Activated naive CD4-positive, alpha-beta T cell treated with anti-CD3 and anti-CD28 coated beads, Interleukin-2, amount 10 ng/mL, durations not matched to agents 7 days and 5 days (primary cell): ENCODE measurements at regions of chr12 and their contacts with region 1.

Region 1: DNA sequence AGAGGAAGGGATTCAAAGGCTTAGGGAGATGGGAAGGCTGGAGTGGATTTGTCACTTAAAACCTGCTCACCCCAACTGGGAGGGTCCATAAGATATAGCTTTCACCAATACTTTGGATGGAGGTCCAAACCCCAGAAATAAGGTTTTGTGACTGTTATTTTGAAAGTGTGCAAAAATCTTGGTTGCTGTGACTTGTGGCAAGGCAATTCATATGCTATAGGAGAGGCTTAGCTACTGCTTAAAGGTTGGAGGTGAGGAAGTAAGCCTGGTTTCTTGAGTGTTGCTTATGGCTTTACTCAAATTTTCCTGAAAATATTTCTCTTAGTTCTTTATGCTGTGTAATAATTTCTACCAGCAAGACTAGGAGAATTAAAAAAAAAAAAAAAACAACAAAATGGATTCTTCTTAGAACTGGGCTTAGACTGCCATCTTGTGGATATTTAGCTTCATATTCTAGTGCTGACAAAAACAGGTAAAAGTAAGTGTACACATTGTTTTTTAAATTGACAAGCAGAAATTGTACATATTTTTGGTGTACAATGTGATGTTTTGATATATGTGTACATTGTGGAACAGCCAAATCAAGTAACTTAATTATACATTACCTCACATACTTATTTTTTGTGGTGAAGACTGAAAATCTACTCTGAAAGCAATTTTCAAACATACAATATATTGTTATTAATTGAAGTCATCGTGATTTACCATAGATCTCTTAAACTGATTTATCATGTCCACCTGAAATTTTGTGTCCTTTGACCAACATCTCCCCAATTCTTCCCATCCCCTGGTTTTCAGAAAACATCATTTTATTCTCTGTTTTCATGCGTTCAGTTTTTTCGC is 23.0 kb downstream of the PDE6H start:
- DNase-seq: no peak
- H3K4me3 Mint-ChIP-seq: no peak overlapping the region
- H3K27ac Mint-ChIP-seq: no peak overlapping the region
- H3K4me1 Mint-ChIP-seq: peaks cover 26% of the 10 kb centered on the region
- H3K27me3 Mint-ChIP-seq: peaks cover 21% of the 10 kb centered on the region

Region 2: DNA sequence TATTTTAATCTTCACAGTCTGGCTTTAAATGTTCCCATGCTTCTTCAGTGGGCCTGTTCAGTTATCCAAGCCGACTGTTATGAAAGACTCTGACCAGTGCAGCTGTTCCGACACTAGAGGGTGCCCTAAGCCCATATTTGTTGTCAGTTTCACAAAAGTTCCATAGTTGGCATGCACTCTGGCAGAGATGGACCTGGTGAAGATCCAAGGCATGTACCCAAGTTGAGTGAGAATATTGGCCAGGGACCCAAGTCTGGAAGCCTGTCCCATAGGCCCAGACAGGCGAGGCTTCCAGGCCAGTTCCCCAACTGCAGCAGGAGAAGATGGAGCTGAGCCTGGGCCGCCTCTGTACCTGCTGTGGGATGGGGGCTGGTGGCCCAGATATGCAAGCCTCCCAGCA is 272.0 kb before region 1 on chr12:
- CTCF ChIA-PET with region 1: interaction called, 20 read pairs
- DNase-seq: peak; percentile 73
- H3K4me3 Mint-ChIP-seq: no peak overlapping the region
- H3K27ac Mint-ChIP-seq: no peak overlapping the region
- H3K4me1 Mint-ChIP-seq: peaks cover 3% of the 10 kb centered on the region
- H3K27me3 Mint-ChIP-seq: peaks cover 17% of the 10 kb centered on the region

Region 3: DNA sequence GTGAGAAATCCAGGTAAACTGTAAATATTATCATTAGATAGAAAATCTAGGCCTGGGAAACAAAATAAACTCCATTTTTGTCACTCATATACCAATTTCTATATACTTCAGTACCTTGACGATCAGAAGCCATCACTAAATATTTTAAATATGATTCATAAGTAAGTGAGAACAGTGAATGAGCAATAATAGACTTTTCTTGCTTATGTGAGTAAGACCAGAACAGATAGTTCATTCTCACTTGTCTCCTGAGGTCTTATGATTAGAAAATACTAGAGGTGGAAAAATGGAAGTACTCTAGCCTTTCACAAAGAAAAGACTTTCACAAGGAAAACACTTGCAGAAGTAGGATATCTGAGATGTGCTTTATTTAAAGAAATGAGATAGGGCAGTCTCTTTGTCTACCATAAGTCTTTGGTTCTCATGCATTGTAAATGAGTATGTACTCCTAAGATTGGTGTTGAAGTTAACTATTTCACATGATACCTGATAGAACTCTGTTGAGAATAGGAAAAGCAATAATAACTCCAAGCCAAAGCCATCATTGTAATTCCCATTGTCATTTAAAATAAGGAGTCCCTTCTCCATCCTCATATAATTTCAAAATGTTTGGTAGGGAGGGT is 171.7 kb before region 1 on chr12:
- CTCF ChIA-PET with region 1: no interaction called
- DNase-seq: no peak
- H3K4me3 Mint-ChIP-seq: no peak overlapping the region
- H3K27ac Mint-ChIP-seq: no peak overlapping the region
- H3K4me1 Mint-ChIP-seq: peaks cover 3% of the 10 kb centered on the region
- H3K27me3 Mint-ChIP-seq: peaks cover 4% of the 10 kb centered on the region

Region 4: GRCh38 chr12:14845350-14845750 is 150.5 kb before region 1 on chr12:
- CTCF ChIA-PET with region 1: interaction called, 106 read pairs
- DNase-seq: peak; percentile 52
- H3K4me3 Mint-ChIP-seq: no peak overlapping the region
- H3K27ac Mint-ChIP-seq: no peak overlapping the region
- H3K4me1 Mint-ChIP-seq: peaks cover 2% of the 10 kb centered on the region
- H3K27me3 Mint-ChIP-seq: peaks cover 8% of the 10 kb centered on the region

Region 5: DNA sequence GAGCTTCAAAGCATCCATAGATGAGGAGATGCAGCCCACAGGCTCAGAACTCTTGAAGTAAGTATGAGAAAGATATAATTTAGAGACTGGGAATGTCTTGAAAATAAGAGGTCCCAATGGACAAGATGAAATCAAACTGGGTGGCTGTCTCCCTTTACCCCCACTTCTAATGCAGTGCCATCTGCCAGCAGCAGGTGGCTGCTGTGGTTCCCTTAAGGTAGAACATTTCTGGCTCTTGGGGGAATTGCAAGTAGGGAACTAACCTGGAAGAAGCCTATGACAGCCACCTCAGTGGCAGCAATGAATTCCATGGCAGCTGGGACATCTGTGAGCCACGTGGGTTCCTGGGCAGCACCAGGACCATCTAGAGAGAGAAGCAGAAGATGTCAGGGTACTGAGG is 58.1 kb before region 1 on chr12:
- CTCF ChIA-PET with region 1: interaction called, 17 read pairs
- DNase-seq: no peak
- H3K4me3 Mint-ChIP-seq: no peak overlapping the region
- H3K27ac Mint-ChIP-seq: no peak overlapping the region
- H3K4me1 Mint-ChIP-seq: peaks cover 35% of the 10 kb centered on the region
- H3K27me3 Mint-ChIP-seq: no peaks in the 10 kb centered on the region

Region 6: DNA sequence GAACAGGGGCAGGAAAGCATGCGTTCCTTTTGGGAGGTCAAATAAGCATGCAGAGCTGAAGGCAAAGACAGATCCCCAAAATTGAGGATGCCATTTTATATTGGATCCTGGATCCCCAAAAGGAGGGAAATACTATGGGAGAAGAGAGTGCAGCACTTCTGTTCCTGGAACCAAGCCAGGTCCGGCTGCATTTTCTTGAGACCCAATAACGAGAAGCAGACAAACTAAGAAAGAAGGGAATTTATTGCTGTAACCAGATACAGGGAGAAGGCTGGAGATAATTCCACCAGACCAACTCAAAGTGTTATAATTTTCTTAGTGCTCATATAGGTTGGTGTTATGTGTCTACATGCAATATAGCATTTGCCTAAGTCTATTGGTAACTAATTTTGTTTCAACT is 37.8 kb after region 1 on chr12:
- CTCF ChIA-PET with region 1: no interaction called
- DNase-seq: no peak
- H3K4me3 Mint-ChIP-seq: no peak overlapping the region
- H3K27ac Mint-ChIP-seq: no peak overlapping the region
- H3K4me1 Mint-ChIP-seq: no peaks in the 10 kb centered on the region
- H3K27me3 Mint-ChIP-seq: no peaks in the 10 kb centered on the region

Region 7: GRCh38 chr12:15205341-15206010 is 209.7 kb after region 1 on chr12:
- CTCF ChIA-PET with region 1: no interaction called
- DNase-seq: no peak
- H3K4me3 Mint-ChIP-seq: no peak overlapping the region
- H3K27ac Mint-ChIP-seq: no peak overlapping the region
- H3K4me1 Mint-ChIP-seq: no peaks in the 10 kb centered on the region
- H3K27me3 Mint-ChIP-seq: peaks cover 3% of the 10 kb centered on the region